Activated CD4-positive, alpha-beta memory T cell treated with anti-CD3 and anti-CD28 coated beads for 36 hours (primary cell): ENCODE measurements at regions of chr2 and their contacts with region 1.

Region 1: GRCh38 chr2:20916604-20917286 is 93.8 kb upstream of the LDAH start:
- DNase-seq: no peak
- H3K4me3 Mint-ChIP-seq: no peak overlapping the region
- H3K27ac Mint-ChIP-seq: no peak overlapping the region
- H3K4me1 Mint-ChIP-seq: no peaks in the 10 kb centered on the region
- H3K27me3 Mint-ChIP-seq: peaks cover 28% of the 10 kb centered on the region

Region 2: DNA sequence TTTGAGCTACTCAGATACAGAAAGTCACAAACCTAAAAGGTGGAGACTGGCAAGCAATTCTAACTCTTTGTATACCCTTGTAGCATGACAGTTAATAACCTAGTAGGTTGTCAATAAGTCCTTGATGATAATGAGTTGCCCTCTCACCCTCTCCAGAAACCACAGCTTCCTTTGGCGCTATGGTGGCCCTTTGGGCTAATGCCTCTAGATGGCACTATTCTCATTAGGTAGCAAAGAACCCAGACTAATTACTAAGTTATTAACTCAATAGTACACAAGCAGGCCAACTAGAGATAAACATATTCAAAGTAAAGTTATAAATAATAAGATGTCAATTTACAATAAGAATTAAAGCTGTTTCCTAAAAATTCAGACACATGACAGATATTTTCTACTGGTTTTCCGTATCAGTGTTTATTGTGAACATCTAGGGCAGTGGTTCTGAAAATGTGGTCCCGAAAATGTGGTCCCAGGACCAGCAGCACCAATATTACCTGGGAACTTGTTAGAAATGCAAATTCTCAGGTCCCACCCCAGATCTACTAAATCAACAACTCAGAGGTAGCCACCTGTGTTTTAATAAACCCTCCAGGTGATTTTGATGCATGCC is 135.0 kb before region 1 on chr2:
- CTCF ChIA-PET with region 1: interaction called, 13 read pairs
- POLR2A ChIA-PET with region 1: no interaction called
- intact Hi-C with region 1: no loop called
- DNase-seq: peak; percentile 20
- H3K4me3 Mint-ChIP-seq: no peak overlapping the region
- H3K27ac Mint-ChIP-seq: no peak overlapping the region
- H3K4me1 Mint-ChIP-seq: no peaks in the 10 kb centered on the region
- H3K27me3 Mint-ChIP-seq: no peaks in the 10 kb centered on the region